PC-3 (cell line): ENCODE measurements at regions of chr9 and their contacts with region 1.

Region 1: GRCh38 chr9:73157811-73158210 is 6.1 kb downstream of the ANXA1 start:
- DNase-seq: no peak
- ATAC-seq: no peak
- H3K4me3 ChIP-seq: no peak overlapping the region
- H3K27ac ChIP-seq: no peak overlapping the region
- H3K4me1 ChIP-seq: peaks cover 28% of the 10 kb centered on the region
- H3K27me3 ChIP-seq: no peaks in the 10 kb centered on the region
- CTCF ChIP-seq: no peak

Region 2: DNA sequence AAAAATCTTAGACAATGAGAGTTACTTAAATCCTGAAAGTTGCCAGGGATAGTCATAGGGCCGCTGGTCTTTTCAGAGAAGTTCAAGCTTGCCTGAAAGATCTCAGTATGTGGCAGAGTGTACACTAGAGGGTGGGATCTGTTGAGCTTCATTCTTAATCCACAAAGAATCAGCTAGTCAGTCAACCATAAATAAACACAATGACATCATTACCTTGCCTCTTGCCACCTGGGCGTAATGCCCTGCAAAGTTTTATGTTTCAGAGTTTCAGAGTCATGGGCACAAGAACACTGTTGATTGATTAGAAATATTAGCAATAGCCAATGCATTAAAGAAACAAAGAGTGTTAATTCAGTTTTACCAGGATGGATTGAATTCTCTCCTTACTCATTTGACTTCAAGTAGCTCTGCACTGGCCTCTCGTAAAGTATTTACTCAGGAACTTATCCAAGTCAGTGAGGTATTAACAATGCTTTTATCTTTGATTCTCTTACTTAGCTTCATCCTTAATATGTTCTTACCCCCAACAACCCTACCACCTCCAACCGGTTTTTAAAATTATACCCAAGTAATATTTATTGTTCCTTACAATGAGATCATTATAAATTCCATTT is 20.4 kb before region 1 on chr9:
- CTCF ChIA-PET with region 1: interaction called, 3 read pairs
- POLR2A ChIA-PET with region 1: interaction called, 10 read pairs
- intact Hi-C with region 1: no loop called
- DNase-seq: peak; percentile 68
- ATAC-seq: peak; percentile 55
- H3K4me3 ChIP-seq: no peak overlapping the region
- H3K27ac ChIP-seq: peak overlapping the region; percentile 33
- H3K4me1 ChIP-seq: peaks cover 45% of the 10 kb centered on the region
- H3K27me3 ChIP-seq: no peaks in the 10 kb centered on the region
- CTCF ChIP-seq: 0 out of 2 replicates have a peak, but pooled peaks have one; percentile 17